Activated T-helper 1 cell treated with anti-CD3 and anti-CD28 coated beads, Interleukin-12 subunit alpha, Interleukin-12 subunit beta, Interleukin-2, Interleukin-4 antibody, amounts not matched to agents 30 ng/mL and 10 ng/mL and 1 ng/mL, durations not matched to agents 14 hours and 24 hours and 36 hours (primary cell): ENCODE measurements at regions of chr6 and their contacts with region 1.

Region 1: DNA sequence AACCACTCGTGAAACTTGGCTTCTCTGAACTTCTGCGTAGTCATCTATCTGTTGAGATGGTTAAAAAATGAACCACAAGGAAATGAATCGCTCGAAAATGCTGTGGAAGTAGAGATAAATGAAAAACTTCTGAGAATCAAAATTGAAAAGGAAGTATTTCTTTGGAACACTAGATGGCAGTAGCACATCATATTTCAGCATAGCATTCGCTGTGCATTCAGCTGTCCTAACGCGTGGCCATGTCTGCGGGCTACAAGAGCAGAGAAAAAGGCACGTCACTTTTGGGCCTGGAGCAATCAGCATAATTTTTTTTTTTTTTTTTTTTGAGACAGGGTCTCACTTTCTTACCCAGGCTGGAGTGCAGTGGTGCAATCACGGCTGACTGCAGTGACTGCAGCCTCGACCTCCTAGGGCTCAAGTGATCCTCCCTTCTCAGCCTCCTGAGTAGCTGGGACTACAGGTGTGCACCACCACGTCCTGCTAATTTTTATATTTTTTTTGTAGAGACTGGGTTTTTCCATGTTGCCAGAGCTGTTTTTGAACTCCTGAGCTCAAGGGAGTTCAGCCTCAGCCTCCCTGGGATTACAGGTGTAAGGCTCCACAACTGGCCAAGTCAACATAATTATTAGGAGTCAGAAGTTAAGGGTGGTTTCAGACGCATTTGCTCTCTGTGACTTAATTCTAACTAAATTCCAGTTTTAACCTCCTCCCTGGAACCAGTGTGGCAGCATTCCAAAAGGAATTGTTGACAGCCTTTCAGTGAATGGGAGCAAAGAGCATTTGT is 8.8 kb upstream of the PERP start:
- DNase-seq: peak; percentile 11
- H3K4me3 Mint-ChIP-seq: no peak overlapping the region
- H3K27ac Mint-ChIP-seq: no peak overlapping the region
- H3K4me1 Mint-ChIP-seq: peaks cover 10% of the 10 kb centered on the region
- H3K27me3 Mint-ChIP-seq: peaks cover 45% of the 10 kb centered on the region

Region 2: DNA sequence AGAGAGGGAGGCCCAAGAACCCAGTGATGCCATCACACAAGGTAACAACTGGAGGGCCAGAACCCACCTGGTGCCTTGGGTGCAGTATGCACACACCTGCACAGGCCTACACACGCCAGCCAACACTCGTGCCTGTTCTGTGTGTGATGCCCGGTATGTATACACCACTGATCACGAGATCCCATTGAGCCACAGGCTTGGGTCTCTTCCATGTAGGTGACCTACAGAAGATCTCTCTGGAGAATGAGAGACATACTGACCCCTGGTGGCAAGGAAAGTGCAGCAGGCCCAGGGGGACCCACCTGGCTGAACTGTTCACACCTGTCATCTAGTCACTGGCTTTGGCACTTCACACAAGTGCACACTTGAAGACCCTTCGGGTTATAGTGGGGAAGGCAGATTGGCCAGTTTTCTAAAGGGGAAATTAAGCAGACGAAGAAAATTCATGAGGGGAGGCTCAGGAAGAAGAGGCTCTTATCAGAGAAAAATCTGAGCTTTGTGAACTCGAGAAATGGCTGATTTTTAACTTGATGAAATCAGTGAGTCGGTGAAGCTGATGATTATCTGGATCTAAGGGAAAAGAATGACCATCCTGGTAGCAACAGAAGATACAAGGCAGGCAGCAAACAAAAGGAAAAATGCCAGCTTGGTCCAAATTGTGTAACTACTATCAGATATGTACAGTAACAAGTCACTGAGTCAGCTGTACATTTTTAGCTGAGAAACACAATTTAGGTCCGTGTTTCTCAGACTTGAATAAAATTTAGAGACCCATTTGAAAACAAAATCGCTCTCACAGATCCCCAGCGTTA is 171.3 kb after region 1 on chr6:
- intact Hi-C with region 1: loop called (anchors 1 kb)
- DNase-seq: no peak
- H3K4me3 Mint-ChIP-seq: no peak overlapping the region
- H3K27ac Mint-ChIP-seq: no peak overlapping the region
- H3K4me1 Mint-ChIP-seq: peaks cover 13% of the 10 kb centered on the region
- H3K27me3 Mint-ChIP-seq: no peaks in the 10 kb centered on the region

Region 3: GRCh38 chr6:138307816-138308728 is 192.0 kb after region 1 on chr6:
- intact Hi-C with region 1: no loop called
- DNase-seq: no peak
- H3K4me3 Mint-ChIP-seq: no peak overlapping the region
- H3K27ac Mint-ChIP-seq: no peak overlapping the region
- H3K4me1 Mint-ChIP-seq: no peaks in the 10 kb centered on the region
- H3K27me3 Mint-ChIP-seq: peaks cover 5% of the 10 kb centered on the region

Region 4: DNA sequence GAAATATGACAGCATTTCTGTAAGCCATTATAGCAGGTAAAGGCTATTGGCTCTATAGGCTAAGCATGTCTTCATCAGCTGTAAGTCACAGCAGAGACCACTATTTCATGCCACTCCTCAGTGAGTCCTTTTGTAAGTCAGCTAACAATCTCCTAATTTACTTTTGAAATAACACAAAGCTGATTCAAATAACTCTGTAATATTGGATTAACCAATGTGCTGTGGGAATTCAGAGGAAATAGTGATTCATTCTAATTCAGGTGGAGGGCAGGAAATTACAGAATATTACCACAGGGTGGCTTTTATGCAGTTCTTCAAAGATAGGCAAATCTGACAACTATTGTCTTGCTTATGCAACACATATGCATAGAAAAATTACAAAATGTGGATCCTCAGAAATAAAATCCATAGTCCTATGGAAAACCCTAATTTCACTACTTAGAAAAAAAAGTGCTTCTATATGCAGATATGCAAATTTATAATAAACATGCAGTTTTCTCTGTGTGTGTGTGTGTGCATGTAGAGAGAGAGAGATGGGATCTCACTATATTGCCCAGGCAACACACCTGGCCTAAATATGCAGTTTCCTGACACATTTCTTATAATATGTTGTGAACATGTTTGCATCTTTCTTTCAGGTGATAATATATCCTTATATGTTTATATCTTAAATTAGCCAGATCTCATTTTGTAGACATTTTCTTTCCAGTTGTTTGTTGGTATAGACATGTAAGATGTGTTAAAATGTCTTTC is 256.8 kb after region 1 on chr6:
- intact Hi-C with region 1: no loop called
- DNase-seq: no peak
- H3K4me3 Mint-ChIP-seq: no peak overlapping the region
- H3K27ac Mint-ChIP-seq: no peak overlapping the region
- H3K4me1 Mint-ChIP-seq: no peaks in the 10 kb centered on the region
- H3K27me3 Mint-ChIP-seq: peaks cover 2% of the 10 kb centered on the region

Region 5: GRCh38 chr6:138428944-138429598 is 313.0 kb after region 1 on chr6:
- intact Hi-C with region 1: loop called (anchors 2 kb)
- DNase-seq: no peak
- H3K4me3 Mint-ChIP-seq: no peak overlapping the region
- H3K27ac Mint-ChIP-seq: no peak overlapping the region
- H3K4me1 Mint-ChIP-seq: peaks cover 5% of the 10 kb centered on the region
- H3K27me3 Mint-ChIP-seq: peaks cover 1% of the 10 kb centered on the region

Region 6: DNA sequence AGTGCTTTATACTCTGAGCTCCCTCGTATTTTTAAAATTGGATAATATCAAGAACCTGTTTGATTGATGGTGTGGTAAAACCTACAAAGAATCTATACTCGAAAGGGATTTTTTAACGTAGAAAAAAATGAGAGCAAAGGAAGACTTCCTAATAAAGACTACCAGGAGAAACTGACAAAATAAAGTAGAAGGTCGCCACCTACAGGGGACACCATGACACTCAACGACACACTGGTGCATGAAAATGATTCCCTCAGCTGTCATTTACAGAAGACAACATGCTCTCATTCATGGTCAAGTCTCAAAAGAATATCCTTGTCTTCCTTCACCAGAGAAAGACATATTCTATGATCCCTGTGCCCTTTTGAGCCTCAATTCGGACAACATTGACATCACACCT is 393.3 kb after region 1 on chr6:
- intact Hi-C with region 1: loop called (anchors 2 kb)
- DNase-seq: peak; percentile 17
- H3K4me3 Mint-ChIP-seq: no peak overlapping the region
- H3K27ac Mint-ChIP-seq: no peak overlapping the region
- H3K4me1 Mint-ChIP-seq: peaks cover 7% of the 10 kb centered on the region
- H3K27me3 Mint-ChIP-seq: peaks cover 14% of the 10 kb centered on the region

Region 7: GRCh38 chr6:138517635-138518034 is 401.6 kb after region 1 on chr6:
- intact Hi-C with region 1: loop called (anchors 1 kb)
- DNase-seq: peak; percentile 51
- H3K4me3 Mint-ChIP-seq: no peak overlapping the region
- H3K27ac Mint-ChIP-seq: no peak overlapping the region
- H3K4me1 Mint-ChIP-seq: peaks cover 10% of the 10 kb centered on the region
- H3K27me3 Mint-ChIP-seq: peaks cover 8% of the 10 kb centered on the region

Region 8: DNA sequence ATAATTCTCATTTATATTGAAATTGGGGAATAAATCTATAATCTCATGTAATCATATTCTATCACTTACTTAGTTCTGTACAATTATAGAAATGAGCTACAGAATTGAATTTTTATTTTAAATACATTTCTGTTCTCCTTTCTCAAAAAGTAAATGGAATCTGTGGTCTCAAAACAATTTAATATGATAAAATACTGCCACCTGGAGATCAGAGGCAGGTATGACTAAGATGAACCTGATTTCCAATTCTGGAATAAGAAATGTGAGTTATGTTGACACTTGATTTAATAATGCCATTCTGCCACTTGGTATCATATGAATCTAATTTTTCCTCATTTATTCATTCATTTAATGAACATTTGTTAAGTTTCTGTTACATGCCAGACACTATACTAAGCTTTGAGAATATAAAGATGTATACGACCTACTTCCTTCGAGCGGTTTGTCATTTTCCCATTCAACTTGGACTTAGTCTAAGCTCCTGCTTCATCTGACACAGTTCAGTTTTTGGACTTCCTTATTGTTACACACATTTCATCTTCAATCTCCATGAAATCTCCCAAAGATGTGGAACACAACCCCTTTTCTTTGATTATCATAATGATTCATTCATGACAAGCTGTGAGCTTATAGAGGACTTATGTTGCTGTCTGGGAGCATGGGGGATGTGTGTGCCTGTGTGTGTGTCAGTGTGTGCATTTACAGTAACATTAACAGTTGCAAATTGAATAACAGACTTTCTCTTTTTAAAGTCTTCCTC is 650.0 kb after region 1 on chr6:
- intact Hi-C with region 1: loop called (anchors 1 kb)
- DNase-seq: no peak
- H3K4me3 Mint-ChIP-seq: no peak overlapping the region
- H3K27ac Mint-ChIP-seq: no peak overlapping the region
- H3K4me1 Mint-ChIP-seq: peaks cover 9% of the 10 kb centered on the region
- H3K27me3 Mint-ChIP-seq: no peaks in the 10 kb centered on the region